ENCODE measurements at regions of chr11 and their contacts with region 1.

Region 1: GRCh38 chr11:4187055-4187988 is 92.7 kb downstream of the RRM1 start:
- DNase-seq: peak; percentile 65 to 82 (median 77)
- H3K4me3 ChIP-seq: peak overlapping the region in 1 of 2 donors; percentile 46
- H3K4me3 Mint-ChIP-seq: peak overlapping the region; percentile 77 to 83 (median 81)
- H3K27ac ChIP-seq: no peak overlapping the region
- H3K27ac Mint-ChIP-seq: peak overlapping the region in 2 of 7 donors; percentile 57 to 75
- H3K4me1 ChIP-seq: no peaks in the 10 kb centered on the region
- H3K4me1 Mint-ChIP-seq: peaks cover 0 to 3% (median under 1%) of the 10 kb centered on the region in 4 donors
- H3K27me3 ChIP-seq: no peaks in the 10 kb centered on the region
- H3K27me3 Mint-ChIP-seq: peaks cover 0 to 3% of the 10 kb centered on the region in 2 donors

Region 2: GRCh38 chr11:4203603-4204360 is 16.5 kb after region 1 on chr11:
- CTCF ChIA-PET with region 1: interaction called, 13 read pairs
- POLR2A ChIA-PET with region 1: no interaction called
- intact Hi-C with region 1: no loop called
- DNase-seq: no peak
- H3K4me3 ChIP-seq: no peak overlapping the region
- H3K4me3 Mint-ChIP-seq: no peak overlapping the region
- H3K27ac ChIP-seq: no peak overlapping the region
- H3K27ac Mint-ChIP-seq: peak overlapping the region in 1 of 7 donors; percentile 32
- H3K4me1 ChIP-seq: no peaks in the 10 kb centered on the region
- H3K4me1 Mint-ChIP-seq: no peaks in the 10 kb centered on the region
- H3K27me3 ChIP-seq: no peaks in the 10 kb centered on the region
- H3K27me3 Mint-ChIP-seq: peaks cover 12 to 17% of the 10 kb centered on the region in 2 donors

Region 3: GRCh38 chr11:4480574-4481566 is 293.5 kb after region 1 on chr11:
- CTCF ChIA-PET with region 1: interaction called, 16 read pairs
- POLR2A ChIA-PET with region 1: no interaction called
- intact Hi-C with region 1: no loop called
- DNase-seq: no peak
- H3K4me3 ChIP-seq: no peak overlapping the region
- H3K4me3 Mint-ChIP-seq: no peak overlapping the region
- H3K27ac ChIP-seq: no peak overlapping the region
- H3K27ac Mint-ChIP-seq: no peak overlapping the region
- H3K4me1 ChIP-seq: no peaks in the 10 kb centered on the region
- H3K4me1 Mint-ChIP-seq: no peaks in the 10 kb centered on the region
- H3K27me3 ChIP-seq: no peaks in the 10 kb centered on the region
- H3K27me3 Mint-ChIP-seq: peaks cover 7 to 14% of the 10 kb centered on the region in 2 donors

Region 4: GRCh38 chr11:4539603-4540219 is 352.4 kb after region 1 on chr11:
- CTCF ChIA-PET with region 1: interaction called, 151 read pairs
- POLR2A ChIA-PET with region 1: no interaction called
- intact Hi-C with region 1: loop called (anchors 1 kb)
- DNase-seq: peak in 4 of 5 donors; percentile 27 to 35 (median 32)
- H3K4me3 ChIP-seq: no peak overlapping the region
- H3K4me3 Mint-ChIP-seq: no peak overlapping the region
- H3K27ac ChIP-seq: no peak overlapping the region
- H3K27ac Mint-ChIP-seq: no peak overlapping the region
- H3K4me1 ChIP-seq: no peaks in the 10 kb centered on the region
- H3K4me1 Mint-ChIP-seq: no peaks in the 10 kb centered on the region
- H3K27me3 ChIP-seq: no peaks in the 10 kb centered on the region
- H3K27me3 Mint-ChIP-seq: peaks cover 1 to 3% of the 10 kb centered on the region in 2 donors

Region 5: GRCh38 chr11:4636962-4637661 is 449.8 kb after region 1 on chr11 and contains the start of gene OR51D1:
- CTCF ChIA-PET with region 1: interaction called, 9 read pairs
- POLR2A ChIA-PET with region 1: no interaction called
- intact Hi-C with region 1: loop called (anchors 2 kb)
- DNase-seq: peak; percentile 47 to 63 (median 59)
- H3K4me3 ChIP-seq: no peak within 1 kb of the TSS
- H3K4me3 Mint-ChIP-seq: no peak within 1 kb of the TSS
- H3K27ac ChIP-seq: no peak within 1 kb of the TSS
- H3K27ac Mint-ChIP-seq: no peak within 1 kb of the TSS
- H3K4me1 ChIP-seq: no peaks in the 10 kb centered on the region
- H3K4me1 Mint-ChIP-seq: no peaks in the 10 kb centered on the region
- H3K27me3 ChIP-seq: no peaks in the 10 kb centered on the region
- H3K27me3 Mint-ChIP-seq: peaks cover 6 to 9% of the 10 kb centered on the region in 2 donors
- total RNA-seq, gene OR51D1: not detected